Activated B cell treated with CpG ODN at 0.5 μM for 24 hours (primary cell): ENCODE measurements at regions of chr9 and their contacts with region 1.

Region 1: DNA sequence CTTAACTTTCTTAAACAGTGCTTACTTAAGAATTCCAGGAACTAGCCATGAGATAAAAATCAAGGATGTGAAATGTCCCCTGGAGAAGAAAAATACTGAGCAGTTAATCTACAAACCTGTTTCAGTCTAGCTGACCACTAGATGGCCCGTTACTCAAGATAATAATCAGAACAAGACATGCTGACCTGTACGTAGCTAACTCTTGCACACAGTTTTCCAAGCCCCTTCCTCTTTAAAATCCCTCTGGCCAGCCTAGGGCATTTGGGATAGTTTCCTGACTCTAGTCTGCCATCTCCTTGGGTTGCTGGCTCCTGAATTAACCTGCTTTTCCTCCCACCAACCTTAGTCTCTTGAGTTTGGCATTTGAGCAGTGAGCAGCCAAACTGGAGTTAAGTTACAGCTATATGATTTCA is 59.2 kb upstream of the TRAF1 start:
- DNase-seq: no peak
- ATAC-seq: no peak
- H3K4me3 Mint-ChIP-seq: no peak overlapping the region
- H3K27ac Mint-ChIP-seq: no peak overlapping the region
- H3K4me1 Mint-ChIP-seq: no peaks in the 10 kb centered on the region
- H3K27me3 Mint-ChIP-seq: no peaks in the 10 kb centered on the region
- CTCF ChIP-seq: no peak

Region 2: GRCh38 chr9:120642129-120642770 is 343.6 kb before region 1 on chr9:
- CTCF ChIA-PET with region 1: no interaction called
- POLR2A ChIA-PET with region 1: no interaction called
- intact Hi-C with region 1: no loop called
- DNase-seq: no peak
- ATAC-seq: no peak
- H3K4me3 Mint-ChIP-seq: no peak overlapping the region
- H3K27ac Mint-ChIP-seq: no peak overlapping the region
- H3K4me1 Mint-ChIP-seq: no peaks in the 10 kb centered on the region
- H3K27me3 Mint-ChIP-seq: no peaks in the 10 kb centered on the region
- CTCF ChIP-seq: no peak

Region 3: DNA sequence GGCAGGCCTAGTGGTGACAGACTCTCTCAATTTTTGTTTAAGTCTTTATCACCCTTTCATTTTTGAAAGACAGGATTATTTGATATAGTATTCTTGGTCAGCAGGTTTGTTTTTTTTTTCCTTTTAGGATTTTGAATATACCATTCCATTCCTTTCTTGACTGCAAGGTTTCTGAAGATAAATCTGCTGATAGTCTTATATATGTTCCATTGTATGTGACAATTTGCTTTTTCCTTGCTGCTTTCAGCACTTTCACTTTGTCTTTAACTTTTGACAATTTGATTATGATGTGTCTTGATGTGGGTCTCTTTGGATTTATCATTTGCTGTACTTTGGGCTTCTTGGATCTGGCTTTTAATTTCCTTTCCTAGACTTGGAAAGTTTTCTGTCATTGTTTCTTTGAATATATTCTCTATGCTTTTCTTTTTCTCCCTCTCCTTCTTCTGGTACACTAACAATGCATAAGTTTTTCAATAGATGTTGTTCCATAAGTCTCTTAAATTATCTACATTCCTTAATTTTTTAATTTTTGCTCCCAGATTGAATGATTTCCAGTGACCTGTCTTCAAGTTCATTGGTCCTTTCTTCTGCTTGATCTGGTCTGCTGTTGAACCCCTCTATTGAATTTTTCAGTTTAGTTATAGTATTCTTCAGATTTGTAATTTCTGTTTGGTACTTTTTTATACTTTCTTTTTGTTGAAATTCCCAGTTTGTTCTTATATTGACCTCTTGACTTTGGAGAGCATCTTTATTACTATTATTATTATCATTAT is 178.0 kb before region 1 on chr9:
- CTCF ChIA-PET with region 1: no interaction called
- POLR2A ChIA-PET with region 1: no interaction called
- intact Hi-C with region 1: no loop called
- DNase-seq: no peak
- ATAC-seq: no peak
- H3K4me3 Mint-ChIP-seq: no peak overlapping the region
- H3K27ac Mint-ChIP-seq: no peak overlapping the region
- H3K4me1 Mint-ChIP-seq: no peaks in the 10 kb centered on the region
- H3K27me3 Mint-ChIP-seq: no peaks in the 10 kb centered on the region
- CTCF ChIP-seq: no peak

Region 4: DNA sequence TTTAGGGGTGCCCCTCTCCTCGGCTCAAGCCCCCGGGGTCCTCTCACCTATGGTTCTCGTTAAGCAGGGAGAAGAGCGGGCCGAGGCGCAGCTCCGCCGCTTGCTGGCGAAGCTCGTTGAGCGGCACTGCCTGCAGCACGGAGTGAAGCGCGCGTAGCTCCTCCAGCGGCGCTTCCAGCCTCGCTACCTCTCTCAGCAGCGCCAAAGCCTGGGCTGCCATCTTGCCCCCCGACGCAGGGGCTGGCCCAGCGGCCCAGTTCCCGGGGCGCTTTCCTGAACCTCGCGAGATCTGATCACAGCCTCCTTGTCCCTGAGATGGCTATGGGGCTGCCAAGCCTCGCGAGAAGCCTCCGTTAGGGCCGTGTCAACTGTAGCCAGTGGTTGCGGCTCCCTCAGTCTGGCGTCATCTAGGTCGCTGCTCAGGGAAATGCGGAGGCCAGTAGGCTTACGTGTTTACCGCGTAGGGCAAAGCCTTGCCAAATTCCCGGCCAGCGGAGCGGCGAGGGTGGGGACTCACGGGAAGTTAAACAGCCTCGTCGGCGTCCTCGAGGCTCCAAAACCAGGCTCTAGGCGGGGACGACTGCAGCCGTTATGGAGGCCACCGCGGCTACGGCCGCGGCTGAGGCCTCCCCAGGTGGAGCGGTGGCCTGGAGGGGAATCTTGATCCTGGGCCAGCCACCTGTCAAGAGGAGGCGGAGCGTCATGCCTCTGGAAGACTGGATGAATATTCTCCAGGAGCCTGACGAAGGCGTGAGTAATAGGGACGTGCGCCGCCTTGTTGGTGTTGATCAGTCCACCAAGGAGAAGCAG is 142.9 kb before region 1 on chr9 and contains the start of gene PSMD5:
- CTCF ChIA-PET with region 1: no interaction called
- POLR2A ChIA-PET with region 1: no interaction called
- intact Hi-C with region 1: no loop called
- DNase-seq: peak; percentile 75
- ATAC-seq: peak; percentile 99
- H3K4me3 Mint-ChIP-seq: peak within 1 kb of the TSS; percentile 90
- H3K27ac Mint-ChIP-seq: peak within 1 kb of the TSS; percentile 91
- H3K4me1 Mint-ChIP-seq: peaks cover 42% of the 10 kb centered on the region
- H3K27me3 Mint-ChIP-seq: no peaks in the 10 kb centered on the region
- CTCF ChIP-seq: no peak
- total RNA-seq, gene PSMD5: 34.8 and 38.9 TPM in 2 replicates

Region 5: DNA sequence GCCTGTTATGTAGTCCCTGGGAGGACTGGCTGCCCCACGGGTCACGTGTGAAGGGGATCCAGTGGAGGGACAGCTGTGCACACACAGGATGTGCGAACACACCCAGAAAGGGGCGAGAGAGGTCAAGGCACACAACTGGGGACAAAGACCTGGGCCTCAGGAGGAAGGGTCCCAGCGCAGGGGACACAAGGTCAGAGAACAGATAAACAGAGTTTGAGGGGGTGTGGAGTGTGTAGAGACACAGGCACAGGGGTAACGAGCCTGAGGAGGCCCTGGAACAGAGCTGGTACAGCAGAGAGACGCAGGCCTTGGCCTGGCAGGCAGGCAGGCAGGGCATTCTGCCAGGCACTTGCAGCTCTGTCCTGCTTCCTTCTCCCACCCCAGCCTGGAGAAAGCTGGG is 128.3 kb before region 1 on chr9:
- CTCF ChIA-PET with region 1: no interaction called
- POLR2A ChIA-PET with region 1: no interaction called
- intact Hi-C with region 1: no loop called
- DNase-seq: no peak
- ATAC-seq: no peak
- H3K4me3 Mint-ChIP-seq: no peak overlapping the region
- H3K27ac Mint-ChIP-seq: no peak overlapping the region
- H3K4me1 Mint-ChIP-seq: peaks cover 3% of the 10 kb centered on the region
- H3K27me3 Mint-ChIP-seq: no peaks in the 10 kb centered on the region
- CTCF ChIP-seq: no peak

Region 6: DNA sequence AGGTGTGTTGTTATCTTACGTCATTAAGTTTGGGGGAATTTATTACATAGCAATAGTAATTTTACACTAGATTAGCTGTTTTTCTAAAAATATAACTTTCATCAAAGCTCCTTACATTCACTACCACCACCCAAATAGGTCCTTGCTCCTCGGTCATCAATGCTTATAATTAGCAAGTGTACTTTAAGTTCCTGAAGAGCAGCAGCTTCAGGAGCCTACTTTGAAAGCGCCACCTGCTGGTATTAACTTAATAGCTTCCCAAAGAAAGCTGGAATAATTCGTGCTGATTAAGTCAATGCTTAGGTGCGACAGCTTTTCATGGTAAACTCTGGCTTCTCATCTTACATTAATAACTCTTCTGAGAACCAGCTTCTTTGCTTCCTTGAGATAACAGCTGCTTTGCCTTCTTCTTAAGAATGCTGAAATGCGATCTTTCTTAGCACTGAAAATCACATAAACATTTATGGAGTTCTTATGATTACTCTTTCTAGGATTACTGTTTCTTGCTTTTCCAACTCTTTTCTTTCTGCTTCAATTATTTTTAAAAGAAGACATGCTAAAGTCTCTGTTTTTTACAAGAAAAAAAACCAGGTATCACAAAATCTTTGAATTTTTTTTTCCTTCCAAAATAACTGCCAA is 74.3 kb after region 1 on chr9:
- CTCF ChIA-PET with region 1: interaction called, 19 read pairs
- POLR2A ChIA-PET with region 1: no interaction called
- intact Hi-C with region 1: loop called (anchors 1 kb)
- DNase-seq: no peak
- ATAC-seq: peak; percentile 67
- H3K4me3 Mint-ChIP-seq: no peak overlapping the region
- H3K27ac Mint-ChIP-seq: no peak overlapping the region
- H3K4me1 Mint-ChIP-seq: peaks cover 5% of the 10 kb centered on the region
- H3K27me3 Mint-ChIP-seq: no peaks in the 10 kb centered on the region
- CTCF ChIP-seq: peak; percentile 56

Region 7: DNA sequence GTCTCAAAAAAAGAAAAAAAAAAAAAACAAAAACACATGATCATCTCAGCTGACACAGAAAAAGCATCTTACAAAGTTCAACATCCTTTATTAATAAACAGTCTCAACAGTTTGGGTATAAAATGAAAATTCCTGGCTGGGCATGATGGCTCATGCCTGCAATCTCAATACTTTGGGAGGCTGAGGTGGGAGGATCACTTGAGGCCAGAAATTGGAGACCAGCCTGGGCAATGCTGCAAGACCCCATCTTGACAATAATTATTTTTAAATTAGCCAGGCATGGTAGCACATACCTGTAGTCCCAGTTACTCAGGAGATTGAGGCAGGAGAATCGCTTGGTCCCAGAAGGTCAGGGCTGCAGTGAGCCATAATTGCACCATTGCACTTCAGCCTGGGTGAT is 81.0 kb after region 1 on chr9:
- CTCF ChIA-PET with region 1: interaction called, 10 read pairs
- POLR2A ChIA-PET with region 1: interaction called, 3 read pairs
- intact Hi-C with region 1: no loop called
- DNase-seq: no peak
- ATAC-seq: no peak
- H3K4me3 Mint-ChIP-seq: no peak overlapping the region
- H3K27ac Mint-ChIP-seq: no peak overlapping the region
- H3K4me1 Mint-ChIP-seq: peaks cover 13% of the 10 kb centered on the region
- H3K27me3 Mint-ChIP-seq: no peaks in the 10 kb centered on the region
- CTCF ChIP-seq: no peak